ENCODE measurements at regions of chrX and their contacts with region 1.

Region 1: GRCh38 chrX:101415180-101416145 is 7.4 kb downstream of the HNRNPH2 start:
- DNase-seq: no peak
- ATAC-seq: no peak

Region 2: GRCh38 chrX:101485199-101485949 is 69.9 kb after region 1 on chrX and contains the start of gene ARMCX4:
- intact Hi-C with region 1: no loop called
- DNase-seq: peak; percentile 66
- ATAC-seq: peak; percentile 71
- total RNA-seq, gene ARMCX4: 5.3 TPM

Region 3: GRCh38 chrX:101550362-101550750 is 134.9 kb after region 1 on chrX and contains the start of gene ARMCX1:
- intact Hi-C with region 1: loop called (anchors 5 kb)
- DNase-seq: peak; percentile 89
- ATAC-seq: peak; percentile 93
- total RNA-seq, gene ARMCX1: 29.6 TPM

Region 4: GRCh38 chrX:101799387-101799786 is 383.9 kb after region 1 on chrX:
- intact Hi-C with region 1: loop called (anchors 2 kb)
- DNase-seq: peak; percentile 76
- ATAC-seq: peak; percentile 99

Region 5: GRCh38 chrX:101931488-101932248 is 516.2 kb after region 1 on chrX and contains the start of gene ZMAT1:
- intact Hi-C with region 1: loop called (anchors 10 kb)
- DNase-seq: peak; percentile 95
- ATAC-seq: peak; percentile 97
- total RNA-seq, gene ZMAT1: 4.2 TPM